CD8-positive, alpha-beta T cell (primary cell): ENCODE measurements at regions of chr1 and their contacts with region 1.

Region 1: DNA sequence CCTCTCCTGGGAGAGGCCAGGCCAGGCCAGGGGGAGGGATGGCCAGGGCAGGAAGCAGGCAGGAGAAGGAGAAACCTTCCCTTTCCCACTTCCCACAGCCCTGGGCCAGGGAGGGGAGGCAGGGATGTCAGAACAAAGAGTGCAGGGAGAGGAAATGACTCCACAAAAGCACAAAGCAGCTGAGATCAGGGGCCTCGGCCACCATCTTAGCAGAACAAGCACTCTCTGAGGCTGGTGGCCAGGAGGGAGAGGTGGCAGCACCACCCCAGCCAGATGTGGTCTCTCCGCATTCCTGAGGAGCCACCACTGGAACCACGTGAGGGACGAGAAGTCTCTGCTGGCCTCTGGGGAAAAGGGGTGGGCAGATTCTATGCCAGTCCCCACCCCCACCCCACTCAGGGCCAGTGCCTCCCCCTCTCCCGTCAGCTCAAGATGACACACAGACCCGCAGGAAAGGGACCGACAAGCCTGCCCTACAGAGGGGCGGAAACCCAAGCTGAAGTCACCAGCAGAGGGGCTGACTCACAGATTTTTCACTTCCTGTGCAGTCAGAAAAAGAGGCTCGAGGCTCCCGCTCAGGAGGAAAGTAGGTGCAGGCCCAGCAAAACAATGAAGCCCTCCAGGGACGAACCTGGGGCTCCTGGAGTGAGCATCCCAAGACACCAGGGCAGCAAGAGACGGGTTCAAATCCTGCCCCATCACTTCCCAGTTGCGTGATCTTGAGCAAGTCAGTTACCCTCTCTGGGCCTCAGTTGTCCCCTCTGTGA is 24.1 kb upstream of the ALDH4A1 start:
- DNase-seq: peak; percentile 59 to 93 (median 84)
- ATAC-seq: peak; percentile 83
- H3K4me3 ChIP-seq: peak overlapping the region; percentile 52 to 63
- H3K4me3 Mint-ChIP-seq: peak overlapping the region; percentile 75
- H3K27ac ChIP-seq: peak overlapping the region; percentile 64 to 82
- H3K27ac Mint-ChIP-seq: peak overlapping the region; percentile 96
- H3K4me1 ChIP-seq: peaks cover 88% of the 10 kb centered on the region
- H3K4me1 Mint-ChIP-seq: peaks cover 85% of the 10 kb centered on the region
- H3K27me3 ChIP-seq: no peaks in the 10 kb centered on the region
- H3K27me3 Mint-ChIP-seq: no peaks in the 10 kb centered on the region
- CTCF ChIP-seq: no peak

Region 2: DNA sequence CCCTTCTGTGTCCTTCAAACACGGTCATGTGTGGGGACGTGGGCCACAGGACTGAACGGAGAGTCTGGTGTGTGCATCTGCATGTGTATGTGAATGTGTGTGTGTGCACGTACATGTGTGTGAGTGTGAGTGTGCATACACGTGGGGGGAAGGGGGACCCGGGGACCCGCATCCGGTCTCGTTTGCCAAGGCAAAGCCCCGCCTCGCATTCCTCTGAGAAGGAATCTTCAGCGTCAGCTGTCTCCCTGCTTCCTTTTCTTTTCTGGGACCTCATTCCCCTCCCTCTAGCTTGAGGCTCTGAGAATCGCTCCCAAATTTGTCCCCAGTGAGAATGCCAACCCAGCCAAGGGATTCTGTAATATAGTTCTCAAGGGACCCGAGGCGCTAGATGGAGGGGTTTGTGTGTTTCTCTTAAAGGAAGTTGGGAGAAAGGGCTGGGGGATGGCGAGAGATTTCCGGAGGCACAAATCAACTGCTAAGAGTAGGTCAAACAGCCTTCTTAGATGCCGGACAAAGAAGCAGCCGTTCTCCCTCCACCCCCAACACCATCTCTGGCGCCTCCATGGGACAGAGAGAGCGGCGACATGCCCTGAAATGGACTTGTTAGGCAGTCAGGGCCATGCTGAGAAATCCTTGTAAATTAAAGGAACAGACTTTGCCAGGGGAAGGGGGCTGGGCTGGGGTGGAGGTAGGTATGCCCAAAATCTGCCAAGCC is 23.3 kb after region 1 on chr1:
- CTCF ChIA-PET with region 1: interaction called, 32 read pairs
- POLR2A ChIA-PET with region 1: interaction called, 72 read pairs
- intact Hi-C with region 1: loop called (anchors 1 kb)
- DNase-seq: peak in 3 of 9 experiments; percentile 35 to 48 (median 37)
- ATAC-seq: no peak
- H3K4me3 ChIP-seq: peak overlapping the region; percentile 20 to 23
- H3K4me3 Mint-ChIP-seq: peak overlapping the region; percentile 82
- H3K27ac ChIP-seq: peak overlapping the region; percentile 95 to 96
- H3K27ac Mint-ChIP-seq: peak overlapping the region; percentile 98
- H3K4me1 ChIP-seq: peaks cover 98% of the 10 kb centered on the region
- H3K4me1 Mint-ChIP-seq: peaks cover 96% of the 10 kb centered on the region
- H3K27me3 ChIP-seq: no peaks in the 10 kb centered on the region
- H3K27me3 Mint-ChIP-seq: no peaks in the 10 kb centered on the region
- CTCF ChIP-seq: no peak

Region 3: GRCh38 chr1:18956369-18957135 is 30.1 kb after region 1 on chr1 and contains the start of gene IFFO2:
- CTCF ChIA-PET with region 1: interaction called, 32 read pairs
- POLR2A ChIA-PET with region 1: interaction called, 72 read pairs
- intact Hi-C with region 1: loop called (anchors 1 kb)
- DNase-seq: peak; percentile 96 to 100 (median 98)
- ATAC-seq: peak; percentile 82
- H3K4me3 ChIP-seq: peak within 1 kb of the TSS; percentile 66 to 80
- H3K4me3 Mint-ChIP-seq: peak within 1 kb of the TSS; percentile 96
- H3K27ac ChIP-seq: peak within 1 kb of the TSS; percentile 36 to 52
- H3K27ac Mint-ChIP-seq: peak within 1 kb of the TSS; percentile 97
- H3K4me1 ChIP-seq: peaks cover 57% of the 10 kb centered on the region
- H3K4me1 Mint-ChIP-seq: peaks cover 59% of the 10 kb centered on the region
- H3K27me3 ChIP-seq: peaks cover 0 to 2% of the 10 kb centered on the region in 2 experiments
- H3K27me3 Mint-ChIP-seq: no peaks in the 10 kb centered on the region
- CTCF ChIP-seq: no peak
- total RNA-seq, gene IFFO2: 92.6 to 107 TPM

Region 4: DNA sequence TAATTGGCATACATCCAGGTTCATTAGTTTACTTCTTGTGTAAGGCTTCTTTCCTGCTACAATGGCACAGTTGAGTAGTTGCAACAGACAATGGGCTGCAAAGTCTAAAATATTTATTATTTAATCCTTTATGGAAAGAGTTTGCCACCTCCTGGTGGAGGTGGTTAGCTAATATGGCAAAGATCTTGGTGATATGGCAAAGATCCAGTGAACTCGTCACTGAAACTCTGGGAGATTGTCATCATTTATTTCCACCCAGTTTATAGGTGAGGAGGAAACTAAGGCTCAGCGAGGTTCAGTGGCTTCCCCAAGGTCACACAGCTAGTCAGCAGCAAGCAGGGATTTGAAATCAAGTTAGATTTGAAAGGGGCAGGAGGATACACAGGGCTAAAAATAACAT is 46.0 kb after region 1 on chr1:
- CTCF ChIA-PET with region 1: interaction called, 27 read pairs
- POLR2A ChIA-PET with region 1: interaction called, 7 read pairs
- intact Hi-C with region 1: loop called in 1 of 2 experiments (anchors 1 kb)
- DNase-seq: peak in 4 of 9 experiments; percentile 27 to 73 (median 52)
- ATAC-seq: peak; percentile 61
- H3K4me3 ChIP-seq: no peak overlapping the region
- H3K4me3 Mint-ChIP-seq: no peak overlapping the region
- H3K27ac ChIP-seq: no peak overlapping the region
- H3K27ac Mint-ChIP-seq: no peak overlapping the region
- H3K4me1 ChIP-seq: peaks cover 3% of the 10 kb centered on the region
- H3K4me1 Mint-ChIP-seq: peaks cover 4% of the 10 kb centered on the region
- H3K27me3 ChIP-seq: no peaks in the 10 kb centered on the region
- H3K27me3 Mint-ChIP-seq: peaks cover 7% of the 10 kb centered on the region
- CTCF ChIP-seq: peak; percentile 59

Region 5: DNA sequence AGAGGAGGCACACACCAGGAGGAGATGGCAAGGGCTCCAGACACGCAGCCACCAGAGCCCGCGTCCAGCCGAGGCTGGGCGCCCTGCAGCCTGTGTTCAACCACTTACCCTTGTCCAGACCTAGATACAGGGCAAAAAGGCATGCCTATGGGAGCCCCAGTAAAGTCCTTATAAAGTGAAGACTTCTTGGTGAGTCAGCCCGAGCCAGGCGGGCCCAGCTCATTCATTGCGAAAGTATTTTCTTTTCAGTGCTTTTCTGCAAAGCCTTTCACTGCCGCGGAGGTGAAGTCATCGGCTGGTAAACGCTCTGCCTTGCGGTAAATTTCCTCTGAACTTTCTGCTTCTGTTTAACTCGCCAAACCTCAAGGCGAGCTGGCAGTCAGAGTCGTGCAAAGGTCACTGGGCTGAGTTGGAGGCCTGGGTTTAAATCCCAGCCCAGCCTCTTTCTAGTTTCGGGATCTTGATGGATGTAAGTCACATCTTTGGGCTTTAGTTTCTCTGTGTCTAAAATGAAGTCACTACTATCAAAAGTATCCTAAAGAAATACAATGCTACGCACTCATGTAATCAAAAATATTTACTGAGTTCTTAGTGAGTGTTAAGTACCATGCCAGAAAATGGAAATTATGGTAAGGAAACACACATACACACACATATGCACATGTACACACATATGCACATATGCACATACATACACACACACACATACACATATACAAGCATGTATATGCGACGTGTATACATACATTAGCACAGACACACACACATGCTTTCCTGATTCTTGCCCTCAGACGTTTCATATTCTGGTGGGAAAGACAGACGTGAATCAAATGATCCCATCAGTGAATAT is 84.7 kb after region 1 on chr1:
- CTCF ChIA-PET with region 1: no interaction called
- POLR2A ChIA-PET with region 1: no interaction called
- intact Hi-C with region 1: loop called in 1 of 2 experiments (anchors 2 kb)
- DNase-seq: peak in 8 of 9 experiments; percentile 46 to 72 (median 62)
- ATAC-seq: peak; percentile 94
- H3K4me3 ChIP-seq: peak overlapping the region in 1 of 2 experiments; percentile 18
- H3K4me3 Mint-ChIP-seq: peak overlapping the region; percentile 33
- H3K27ac ChIP-seq: no peak overlapping the region
- H3K27ac Mint-ChIP-seq: peak overlapping the region; percentile 71
- H3K4me1 ChIP-seq: peaks cover 17% of the 10 kb centered on the region
- H3K4me1 Mint-ChIP-seq: peaks cover 28% of the 10 kb centered on the region
- H3K27me3 ChIP-seq: no peaks in the 10 kb centered on the region
- H3K27me3 Mint-ChIP-seq: peaks cover 3% of the 10 kb centered on the region
- CTCF ChIP-seq: no peak

Region 6: GRCh38 chr1:19074902-19075721 is 148.6 kb after region 1 on chr1:
- CTCF ChIA-PET with region 1: interaction called, 8 read pairs
- POLR2A ChIA-PET with region 1: interaction called, 6 read pairs
- intact Hi-C with region 1: loop called in 1 of 2 experiments (anchors 1 kb)
- DNase-seq: peak in 1 of 9 experiments; percentile 23
- ATAC-seq: peak; percentile 24
- H3K4me3 ChIP-seq: peak overlapping the region; percentile 16 to 21
- H3K4me3 Mint-ChIP-seq: peak overlapping the region; percentile 56
- H3K27ac ChIP-seq: peak overlapping the region in 1 of 2 experiments; percentile 52
- H3K27ac Mint-ChIP-seq: peak overlapping the region; percentile 69
- H3K4me1 ChIP-seq: peaks cover 46% of the 10 kb centered on the region
- H3K4me1 Mint-ChIP-seq: peaks cover 41% of the 10 kb centered on the region
- H3K27me3 ChIP-seq: no peaks in the 10 kb centered on the region
- H3K27me3 Mint-ChIP-seq: no peaks in the 10 kb centered on the region
- CTCF ChIP-seq: no peak